CD8-positive, alpha-beta T cell (primary cell): ENCODE measurements at regions of chr1 and their contacts with region 1.

Region 1: DNA sequence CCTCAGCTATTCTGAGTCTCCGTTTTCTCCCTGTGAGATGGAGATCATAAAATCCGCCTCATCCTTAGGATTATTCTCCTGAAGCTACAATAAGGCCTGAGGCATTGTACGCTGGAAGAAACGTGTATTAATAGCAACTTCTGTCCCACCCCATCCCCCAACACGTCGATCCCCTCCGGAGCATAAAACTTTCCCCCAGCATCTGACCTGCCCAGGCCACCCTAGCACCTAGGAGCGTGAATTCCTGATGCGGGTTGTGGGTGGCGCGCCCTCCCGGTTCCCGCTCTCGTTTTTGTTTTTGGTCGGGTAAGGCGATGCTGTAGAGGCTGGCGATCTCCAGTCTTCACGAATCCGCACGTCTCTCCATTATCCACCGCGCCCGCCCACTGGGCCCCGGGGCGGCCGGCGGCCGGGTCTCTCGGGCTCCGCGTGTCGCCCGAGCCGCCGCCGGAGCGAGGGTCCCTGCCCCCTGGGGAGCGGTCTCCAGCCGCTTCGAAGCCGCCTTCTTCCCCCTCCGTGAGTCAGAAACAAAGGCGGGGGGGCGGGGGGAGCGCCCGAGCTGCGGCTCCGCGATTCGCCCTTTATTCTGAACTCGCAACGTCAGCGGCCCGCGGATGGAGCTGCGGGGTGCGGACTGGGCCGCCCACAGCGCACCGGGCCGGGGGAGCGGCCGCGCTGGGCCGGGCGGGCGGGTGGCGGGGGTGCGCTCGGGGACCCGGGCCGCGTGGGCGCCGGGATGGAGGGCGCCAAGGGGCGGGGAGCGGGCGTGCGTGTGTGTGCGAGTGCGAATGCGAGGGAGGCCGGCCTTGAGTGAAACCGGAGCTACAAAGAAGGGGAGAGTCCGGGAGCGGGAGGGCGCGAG is at the start of gene PLEKHO1:
- DNase-seq: peak; percentile 58 to 90 (median 85)
- ATAC-seq: peak; percentile 63
- H3K4me3 ChIP-seq: peak within 1 kb of the TSS; percentile 69 to 87
- H3K4me3 Mint-ChIP-seq: peak within 1 kb of the TSS; percentile 95
- H3K27ac ChIP-seq: peak within 1 kb of the TSS; percentile 72 to 79
- H3K27ac Mint-ChIP-seq: peak within 1 kb of the TSS; percentile 97
- H3K4me1 ChIP-seq: peaks cover 36% of the 10 kb centered on the region
- H3K4me1 Mint-ChIP-seq: peaks cover 70% of the 10 kb centered on the region
- H3K27me3 ChIP-seq: no peaks in the 10 kb centered on the region
- H3K27me3 Mint-ChIP-seq: no peaks in the 10 kb centered on the region
- CTCF ChIP-seq: no peak
- total RNA-seq, gene PLEKHO1: 82.5 to 90.1 TPM

Region 2: DNA sequence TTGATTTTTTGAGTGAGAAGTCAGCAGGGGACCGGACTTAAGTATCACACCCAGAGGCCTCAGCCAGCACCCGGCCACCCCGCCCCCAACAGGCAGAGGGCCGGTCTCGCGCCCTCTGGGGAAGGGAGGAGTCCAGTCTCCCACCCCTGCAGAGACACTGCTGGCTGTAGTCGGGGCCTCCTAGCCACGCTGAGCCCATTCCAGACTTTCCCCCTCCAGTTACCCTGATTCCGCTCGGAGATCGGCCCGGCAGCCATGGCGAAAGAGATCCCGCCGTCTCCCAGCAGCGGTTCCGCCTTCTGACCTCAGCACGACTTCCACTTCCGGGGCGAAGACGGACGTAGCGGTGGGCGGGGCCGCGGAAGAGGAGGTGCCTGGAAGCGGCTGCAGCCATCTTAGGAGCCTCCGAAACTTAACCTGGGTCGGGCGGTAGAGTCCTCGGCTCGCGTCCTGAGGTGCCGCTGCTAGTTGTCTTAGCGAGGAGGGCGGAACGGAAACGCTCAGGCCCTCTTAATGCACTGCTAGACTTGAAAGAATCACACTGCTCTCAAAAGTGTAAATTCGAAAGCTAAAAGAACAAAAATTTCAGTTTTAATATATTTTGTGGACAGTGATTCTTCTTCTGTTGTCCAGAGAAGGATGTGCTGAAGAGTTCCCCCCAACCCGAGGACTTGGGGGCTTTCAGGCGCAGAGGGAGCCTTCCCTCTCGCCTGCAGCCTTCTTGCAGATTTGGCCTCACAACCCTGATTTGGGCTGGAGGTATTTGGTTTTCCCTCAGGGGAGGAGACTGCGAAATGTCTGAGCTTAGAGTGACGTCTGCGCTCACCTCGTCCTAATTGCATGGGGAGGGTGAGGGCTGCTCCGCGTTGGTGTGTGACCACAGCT is 221.8 kb before region 1 on chr1 and contains the start of gene SF3B4:
- CTCF ChIA-PET with region 1: no interaction called
- POLR2A ChIA-PET with region 1: no interaction called
- intact Hi-C with region 1: loop called in 1 of 2 experiments (anchors 1 kb)
- DNase-seq: peak; percentile 91 to 98 (median 96)
- ATAC-seq: peak; percentile 94
- H3K4me3 ChIP-seq: peak within 1 kb of the TSS; percentile 86 to 97
- H3K4me3 Mint-ChIP-seq: peak within 1 kb of the TSS; percentile 94
- H3K27ac ChIP-seq: peak within 1 kb of the TSS; percentile 71 to 95
- H3K27ac Mint-ChIP-seq: peak within 1 kb of the TSS; percentile 91
- H3K4me1 ChIP-seq: peaks cover 34% of the 10 kb centered on the region
- H3K4me1 Mint-ChIP-seq: peaks cover 45% of the 10 kb centered on the region
- H3K27me3 ChIP-seq: no peaks in the 10 kb centered on the region
- H3K27me3 Mint-ChIP-seq: peaks cover 2% of the 10 kb centered on the region
- CTCF ChIP-seq: no peak
- total RNA-seq, gene SF3B4: 52.0 to 59.1 TPM

Region 3: GRCh38 chr1:150072959-150073358 is 76.5 kb before region 1 on chr1:
- CTCF ChIA-PET with region 1: interaction called, 39 read pairs
- POLR2A ChIA-PET with region 1: interaction called, 15 read pairs
- intact Hi-C with region 1: no loop called
- DNase-seq: peak in 2 of 9 experiments; percentile 24 to 46
- ATAC-seq: peak; percentile 86
- H3K4me3 ChIP-seq: no peak overlapping the region
- H3K4me3 Mint-ChIP-seq: no peak overlapping the region
- H3K27ac ChIP-seq: no peak overlapping the region
- H3K27ac Mint-ChIP-seq: no peak overlapping the region
- H3K4me1 ChIP-seq: peaks cover 7% of the 10 kb centered on the region
- H3K4me1 Mint-ChIP-seq: peaks cover 25% of the 10 kb centered on the region
- H3K27me3 ChIP-seq: no peaks in the 10 kb centered on the region
- H3K27me3 Mint-ChIP-seq: no peaks in the 10 kb centered on the region
- CTCF ChIP-seq: peak; percentile 69

Region 4: DNA sequence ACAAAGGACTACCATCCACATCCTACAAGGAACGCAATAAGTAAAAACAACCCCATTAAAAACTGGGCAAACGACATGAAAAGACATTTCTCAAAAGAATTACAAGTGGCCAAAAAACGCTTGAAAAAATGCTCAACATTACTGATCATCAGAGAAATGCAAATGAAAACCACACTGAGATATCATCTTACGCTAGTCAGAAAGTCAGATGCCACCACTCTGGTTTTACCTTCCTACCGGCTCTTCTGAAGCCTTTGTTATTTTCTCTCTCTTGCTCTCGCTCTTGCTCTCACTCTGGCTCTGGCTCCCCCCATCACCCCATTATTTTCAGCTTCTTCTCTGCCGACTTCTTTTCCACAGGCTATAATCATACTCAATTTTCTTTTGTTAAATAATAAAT is 43.2 kb before region 1 on chr1:
- CTCF ChIA-PET with region 1: interaction called, 3 read pairs
- POLR2A ChIA-PET with region 1: interaction called, 25 read pairs
- intact Hi-C with region 1: loop called (anchors 2 to 5 kb)
- DNase-seq: peak in 6 of 9 experiments; percentile 2 to 69 (median 27)
- ATAC-seq: peak; percentile 71
- H3K4me3 ChIP-seq: no peak overlapping the region
- H3K4me3 Mint-ChIP-seq: peak overlapping the region; percentile 68
- H3K27ac ChIP-seq: peak overlapping the region in 1 of 2 experiments; percentile 65
- H3K27ac Mint-ChIP-seq: peak overlapping the region; percentile 95
- H3K4me1 ChIP-seq: peaks cover 58% of the 10 kb centered on the region
- H3K4me1 Mint-ChIP-seq: peaks cover 78% of the 10 kb centered on the region
- H3K27me3 ChIP-seq: no peaks in the 10 kb centered on the region
- H3K27me3 Mint-ChIP-seq: no peaks in the 10 kb centered on the region
- CTCF ChIP-seq: no peak

Region 5: DNA sequence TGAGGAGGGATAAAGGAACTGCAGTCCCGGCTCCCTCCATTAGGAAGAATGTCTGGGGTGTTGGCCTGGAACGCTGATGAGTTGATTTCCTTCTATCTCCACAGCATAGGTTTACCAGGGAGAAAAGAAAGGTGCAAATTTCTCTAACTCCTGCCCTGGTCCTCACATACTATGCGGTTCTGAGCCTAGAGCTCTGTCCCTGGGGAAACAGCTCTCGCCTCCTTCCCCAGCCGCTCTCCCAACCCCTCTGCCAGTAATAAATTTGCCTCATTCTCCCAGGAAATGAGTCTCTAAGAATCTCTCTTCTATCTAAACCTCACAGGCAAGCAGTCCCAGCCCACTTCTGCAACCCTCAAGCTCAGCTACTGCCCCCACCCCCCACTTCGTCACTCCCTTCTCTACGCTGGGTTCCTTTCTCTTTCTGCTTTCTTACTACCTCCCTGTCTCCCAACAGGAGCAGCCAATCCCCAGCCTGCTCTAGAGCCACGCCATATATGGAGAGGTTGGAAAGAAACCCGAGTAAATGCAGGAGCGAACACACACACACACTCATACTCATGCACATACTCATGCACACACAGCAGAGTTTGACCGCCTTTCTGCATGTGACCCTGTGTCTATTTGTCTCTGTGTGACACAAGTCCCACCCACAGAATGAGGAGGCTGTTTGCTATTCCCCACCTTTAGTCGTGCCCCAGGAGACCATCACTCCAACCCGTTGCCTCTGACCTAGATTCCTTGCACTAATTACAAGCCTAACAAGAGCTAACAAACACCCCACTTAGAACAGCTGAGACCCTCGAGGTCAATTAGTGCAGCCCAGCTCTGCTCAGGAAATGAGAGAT is 13.6 kb after region 1 on chr1:
- CTCF ChIA-PET with region 1: interaction called, 76 read pairs
- POLR2A ChIA-PET with region 1: interaction called, 16 read pairs
- intact Hi-C with region 1: loop called in 1 of 2 experiments (anchors 2 kb)
- DNase-seq: peak in 1 of 9 experiments; percentile 46
- ATAC-seq: peak; percentile 45
- H3K4me3 ChIP-seq: no peak overlapping the region
- H3K4me3 Mint-ChIP-seq: peak overlapping the region; percentile 6
- H3K27ac ChIP-seq: no peak overlapping the region
- H3K27ac Mint-ChIP-seq: peak overlapping the region; percentile 10
- H3K4me1 ChIP-seq: peaks cover 46% of the 10 kb centered on the region
- H3K4me1 Mint-ChIP-seq: peaks cover 43% of the 10 kb centered on the region
- H3K27me3 ChIP-seq: no peaks in the 10 kb centered on the region
- H3K27me3 Mint-ChIP-seq: no peaks in the 10 kb centered on the region
- CTCF ChIP-seq: no peak

Region 6: GRCh38 chr1:150168960-150169601 is 19.6 kb after region 1 on chr1:
- CTCF ChIA-PET with region 1: interaction called, 76 read pairs
- POLR2A ChIA-PET with region 1: interaction called, 16 read pairs
- intact Hi-C with region 1: loop called in 1 of 2 experiments (anchors 2 kb)
- DNase-seq: peak in 8 of 9 experiments; percentile 34 to 73 (median 58)
- ATAC-seq: peak; percentile 56
- H3K4me3 ChIP-seq: no peak overlapping the region
- H3K4me3 Mint-ChIP-seq: no peak overlapping the region
- H3K27ac ChIP-seq: no peak overlapping the region
- H3K27ac Mint-ChIP-seq: no peak overlapping the region
- H3K4me1 ChIP-seq: no peaks in the 10 kb centered on the region
- H3K4me1 Mint-ChIP-seq: no peaks in the 10 kb centered on the region
- H3K27me3 ChIP-seq: no peaks in the 10 kb centered on the region
- H3K27me3 Mint-ChIP-seq: no peaks in the 10 kb centered on the region
- CTCF ChIP-seq: peak; percentile 61

Region 7: DNA sequence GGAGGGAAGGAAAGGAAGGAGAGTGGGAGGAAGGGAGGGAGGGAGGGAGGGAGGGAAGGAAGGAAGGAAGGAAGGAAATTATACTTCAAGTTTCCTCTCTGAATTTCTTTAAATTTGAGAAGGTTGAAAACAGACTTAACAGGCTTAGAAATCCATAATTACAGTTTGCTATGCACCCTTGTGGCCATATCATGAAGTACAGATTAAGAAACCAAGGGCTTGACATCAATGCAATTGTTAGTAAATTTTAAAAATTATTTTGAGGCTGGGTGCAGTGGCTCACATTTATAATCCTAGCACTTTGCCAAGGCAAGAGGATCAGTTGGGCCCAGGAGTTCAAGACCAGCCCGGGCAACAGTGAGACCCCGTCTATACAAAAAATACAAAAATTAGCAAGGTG is 72.0 kb after region 1 on chr1:
- CTCF ChIA-PET with region 1: no interaction called
- POLR2A ChIA-PET with region 1: no interaction called
- intact Hi-C with region 1: no loop called
- DNase-seq: peak in 2 of 9 experiments; percentile 44 to 59
- ATAC-seq: peak; percentile 64
- H3K4me3 ChIP-seq: no peak overlapping the region
- H3K4me3 Mint-ChIP-seq: no peak overlapping the region
- H3K27ac ChIP-seq: no peak overlapping the region
- H3K27ac Mint-ChIP-seq: no peak overlapping the region
- H3K4me1 ChIP-seq: no peaks in the 10 kb centered on the region
- H3K4me1 Mint-ChIP-seq: no peaks in the 10 kb centered on the region
- H3K27me3 ChIP-seq: no peaks in the 10 kb centered on the region
- H3K27me3 Mint-ChIP-seq: no peaks in the 10 kb centered on the region
- CTCF ChIP-seq: peak; percentile 52

Region 8: DNA sequence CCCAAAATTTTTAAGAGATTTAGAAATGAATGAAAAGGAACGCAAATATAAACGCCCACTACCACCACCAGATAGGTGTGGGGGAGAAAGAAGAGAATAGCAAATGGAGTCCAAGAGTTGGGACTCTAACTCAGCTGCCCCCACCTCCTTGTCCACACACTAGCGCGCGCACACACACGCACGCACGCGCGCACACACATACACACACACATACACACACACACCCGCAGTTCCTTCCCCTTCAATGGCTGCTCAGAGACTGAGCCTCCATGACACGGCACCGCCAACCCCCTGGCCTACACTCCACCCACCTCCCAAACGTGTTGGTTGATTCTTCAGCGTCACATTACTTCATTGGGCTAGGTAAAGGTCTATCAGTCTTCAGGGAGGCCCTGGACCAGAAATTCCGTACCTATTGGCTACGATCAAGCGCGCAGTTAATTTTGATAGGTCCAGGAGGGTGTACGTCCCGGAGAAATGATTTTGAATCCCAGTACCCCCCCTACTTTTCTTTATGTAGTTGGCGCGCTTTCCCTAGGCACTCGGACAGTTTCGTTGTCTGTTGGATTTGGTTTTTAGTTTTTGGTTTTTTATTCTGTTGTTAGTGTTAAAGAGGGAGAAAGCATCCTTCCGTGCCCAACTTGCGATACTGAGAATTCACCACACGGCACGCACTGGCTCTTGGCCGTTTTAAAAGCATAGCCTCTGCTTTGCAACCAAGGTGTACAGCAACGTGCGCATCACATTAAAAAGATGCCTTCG is 86.5 kb after region 1 on chr1 and contains the start of gene ANP32E:
- CTCF ChIA-PET with region 1: no interaction called
- POLR2A ChIA-PET with region 1: interaction called, 5 read pairs
- intact Hi-C with region 1: loop called in 1 of 2 experiments (anchors 1 kb)
- DNase-seq: peak; percentile 86 to 99 (median 94)
- ATAC-seq: peak; percentile 90
- H3K4me3 ChIP-seq: peak within 1 kb of the TSS; percentile 72 to 80
- H3K4me3 Mint-ChIP-seq: no peak within 1 kb of the TSS
- H3K27ac ChIP-seq: peak within 1 kb of the TSS; percentile 89 to 96
- H3K27ac Mint-ChIP-seq: peak within 1 kb of the TSS; percentile 93
- H3K4me1 ChIP-seq: peaks cover 12% of the 10 kb centered on the region
- H3K4me1 Mint-ChIP-seq: peaks cover 18% of the 10 kb centered on the region
- H3K27me3 ChIP-seq: no peaks in the 10 kb centered on the region
- H3K27me3 Mint-ChIP-seq: no peaks in the 10 kb centered on the region
- CTCF ChIP-seq: no peak
- total RNA-seq, gene ANP32E: 30.6 to 35.0 TPM

Region 9: DNA sequence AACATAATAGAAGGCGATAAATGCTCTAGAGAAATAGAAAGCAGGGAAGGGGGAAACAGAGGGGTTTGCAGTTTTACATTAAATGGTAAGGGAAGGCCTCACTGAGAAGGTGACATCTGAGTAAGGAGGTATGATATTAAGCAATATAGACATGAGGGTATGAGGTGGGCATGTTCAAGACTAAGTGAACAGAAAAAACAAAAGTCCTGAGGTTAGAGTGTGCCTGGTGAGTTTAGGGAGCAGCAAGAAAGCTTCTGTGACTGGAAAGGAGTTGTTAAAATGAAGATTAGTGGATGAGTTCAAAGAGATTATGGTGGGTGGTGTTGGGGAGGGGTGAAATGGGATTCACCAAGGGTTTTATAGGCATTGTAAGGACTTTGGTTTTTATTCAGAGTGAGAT is 223.1 kb after region 1 on chr1:
- CTCF ChIA-PET with region 1: no interaction called
- POLR2A ChIA-PET with region 1: no interaction called
- intact Hi-C with region 1: no loop called
- DNase-seq: no peak
- ATAC-seq: no peak
- H3K4me3 ChIP-seq: no peak overlapping the region
- H3K4me3 Mint-ChIP-seq: peak overlapping the region; percentile 35
- H3K27ac ChIP-seq: no peak overlapping the region
- H3K27ac Mint-ChIP-seq: peak overlapping the region; percentile 10
- H3K4me1 ChIP-seq: peaks cover 58% of the 10 kb centered on the region
- H3K4me1 Mint-ChIP-seq: peaks cover 72% of the 10 kb centered on the region
- H3K27me3 ChIP-seq: no peaks in the 10 kb centered on the region
- H3K27me3 Mint-ChIP-seq: no peaks in the 10 kb centered on the region
- CTCF ChIP-seq: no peak